AG04449 (cell line): ENCODE measurements at regions of chr5 and their contacts with region 1.

Region 1: DNA sequence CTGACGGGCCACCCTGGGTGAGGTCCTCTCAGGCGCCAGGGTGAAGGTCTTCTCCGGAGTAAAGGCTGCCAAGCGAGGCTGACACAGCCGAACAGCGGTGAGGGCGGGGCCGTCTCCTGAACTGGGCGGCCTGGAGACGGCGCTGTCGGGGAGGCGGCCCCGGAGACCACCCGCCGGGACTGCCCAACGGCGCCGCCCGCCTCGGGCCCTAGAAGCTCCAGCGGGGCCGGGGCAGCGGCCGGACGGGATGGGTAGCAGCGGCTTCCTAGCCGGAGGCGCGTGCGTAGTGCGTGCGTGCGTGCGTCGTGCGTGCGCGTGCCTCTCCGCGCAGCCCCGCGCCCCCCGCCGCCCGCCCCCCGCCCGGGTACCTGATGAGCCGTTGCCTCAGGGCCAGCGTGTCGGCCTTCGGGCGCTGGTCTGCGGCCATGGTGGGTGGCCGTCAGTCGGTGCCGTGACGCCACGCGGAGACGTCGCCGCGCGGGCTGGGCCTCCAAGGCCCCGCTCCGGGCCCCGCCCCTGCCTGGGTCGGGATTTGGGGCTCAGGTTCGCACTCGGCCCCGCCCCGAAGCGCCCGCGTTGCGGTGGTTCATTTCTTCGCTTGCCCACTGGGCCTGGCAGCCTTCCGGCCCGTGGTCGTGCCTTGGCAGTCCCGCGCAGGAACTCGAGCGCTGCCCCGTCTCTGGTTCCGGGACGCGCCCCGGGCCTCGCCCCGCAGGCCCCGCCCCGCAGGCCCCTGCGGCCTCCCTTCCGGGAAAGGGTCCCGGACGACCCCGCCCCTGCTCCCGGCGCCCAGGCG is at the start of gene PHYKPL:
- DNase-seq: no peak
- H3K4me3 ChIP-seq: peak within 1 kb of the TSS; percentile 86
- CTCF ChIP-seq: peak; percentile 15

Region 2: GRCh38 chr5:178204182-178204894 is 28.0 kb before region 1 on chr5 and contains the start of gene HNRNPAB:
- CTCF ChIA-PET with region 1: interaction called, 4 read pairs
- POLR2A ChIA-PET with region 1: interaction called, 21 read pairs
- DNase-seq: peak; percentile 82
- H3K4me3 ChIP-seq: peak within 1 kb of the TSS; percentile 93
- CTCF ChIP-seq: no peak

Region 3: GRCh38 chr5:178244576-178244975 is 12.3 kb after region 1 on chr5:
- CTCF ChIA-PET with region 1: interaction called, 16 read pairs
- POLR2A ChIA-PET with region 1: interaction called, 3 read pairs
- DNase-seq: peak; percentile 31
- H3K4me3 ChIP-seq: no peak overlapping the region
- CTCF ChIP-seq: no peak

Region 4: GRCh38 chr5:178252258-178252657 is 19.9 kb after region 1 on chr5:
- CTCF ChIA-PET with region 1: interaction called, 13 read pairs
- POLR2A ChIA-PET with region 1: no interaction called
- DNase-seq: no peak
- H3K4me3 ChIP-seq: no peak overlapping the region
- CTCF ChIP-seq: no peak

Region 5: DNA sequence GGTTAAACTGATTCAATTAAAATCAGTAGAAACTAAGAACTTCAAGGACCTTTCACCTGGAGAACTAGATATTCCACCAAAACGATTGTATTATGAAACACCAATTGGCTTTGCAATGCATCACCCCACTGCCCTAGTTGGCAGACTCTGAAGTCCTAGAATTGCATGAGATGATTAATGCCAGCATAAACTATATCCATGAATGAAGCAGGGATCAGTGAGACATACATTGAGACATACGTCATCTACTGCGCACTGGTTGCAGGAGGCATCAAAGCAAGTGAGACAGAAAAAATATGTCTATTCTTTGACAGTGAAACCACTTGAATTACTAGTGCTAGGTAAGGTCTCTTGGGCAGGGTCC is 507.9 kb after region 1 on chr5:
- CTCF ChIA-PET with region 1: no interaction called
- POLR2A ChIA-PET with region 1: no interaction called
- DNase-seq: no peak
- H3K4me3 ChIP-seq: no peak overlapping the region
- CTCF ChIP-seq: no peak